ENCODE measurements at regions of chr14 and their contacts with region 1.

Region 1: GRCh38 chr14:64636208-64636979 is 67.8 kb upstream of the PLEKHG3 start:
- DNase-seq: peak; percentile 74 to 87
- ATAC-seq: peak; percentile 93
- H3K4me3 ChIP-seq: no peak overlapping the region
- H3K27ac ChIP-seq: no peak overlapping the region
- H3K4me1 ChIP-seq: no peaks in the 10 kb centered on the region
- H3K27me3 ChIP-seq: no peaks in the 10 kb centered on the region

Region 2: GRCh38 chr14:64503478-64504309 is 132.7 kb before region 1 on chr14 and contains the start of gene ZBTB25:
- intact Hi-C with region 1: loop called in 1 of 2 experiments (anchors 5 kb)
- DNase-seq: peak; percentile 95
- ATAC-seq: peak; percentile 92
- H3K4me3 ChIP-seq: peak within 1 kb of the TSS; percentile 74 to 88
- H3K27ac ChIP-seq: peak within 1 kb of the TSS; percentile 94
- H3K4me1 ChIP-seq: no peaks in the 10 kb centered on the region
- H3K27me3 ChIP-seq: no peaks in the 10 kb centered on the region
- total RNA-seq, gene ZBTB25: 17.2 to 25.4 TPM

Region 3: DNA sequence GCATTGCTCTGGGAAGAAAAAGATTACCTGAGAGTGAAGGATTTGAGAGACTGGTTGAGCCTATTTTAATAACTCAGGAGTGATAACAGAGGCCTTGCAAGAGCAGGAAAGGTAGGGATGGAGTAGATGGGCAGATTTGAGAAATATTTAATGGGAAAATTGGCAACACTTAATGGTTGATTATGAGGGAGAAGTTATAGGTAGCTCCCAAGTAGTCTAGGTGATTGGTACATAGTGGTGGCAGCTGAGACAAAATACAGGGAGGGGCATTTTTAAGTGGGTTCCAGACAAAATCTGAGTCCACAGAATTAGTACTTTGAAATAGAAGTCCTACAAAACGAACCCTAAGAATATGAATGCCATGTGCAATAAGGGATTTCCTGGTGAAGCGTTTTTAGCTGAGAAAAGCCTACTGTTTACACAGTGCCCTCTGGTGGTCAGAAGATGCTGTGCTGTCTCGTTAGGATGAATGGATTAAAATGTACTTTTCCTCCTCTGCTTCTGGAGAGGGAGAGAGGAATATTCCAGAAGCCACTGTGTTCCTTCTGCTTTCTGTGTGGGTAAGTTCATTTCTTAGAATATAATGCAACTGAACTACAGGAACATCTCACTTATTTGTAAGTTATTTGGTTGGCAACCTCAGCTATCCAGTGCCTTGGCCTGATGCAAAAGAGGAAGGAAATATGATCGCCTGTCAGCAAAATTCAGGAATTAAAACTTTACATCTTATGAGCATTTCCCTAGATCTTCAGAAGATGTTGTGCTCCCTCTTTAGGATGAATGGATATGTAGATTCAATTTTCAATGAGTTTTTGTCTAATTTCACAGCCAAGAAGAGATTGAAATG is 125.3 kb before region 1 on chr14:
- intact Hi-C with region 1: loop called (anchors 5 kb)
- DNase-seq: peak in 1 of 2 donors; percentile 70
- ATAC-seq: peak; percentile 90
- H3K4me3 ChIP-seq: no peak overlapping the region
- H3K27ac ChIP-seq: no peak overlapping the region
- H3K4me1 ChIP-seq: peaks cover 2 to 4% of the 10 kb centered on the region in 2 donors
- H3K27me3 ChIP-seq: no peaks in the 10 kb centered on the region

Region 4: DNA sequence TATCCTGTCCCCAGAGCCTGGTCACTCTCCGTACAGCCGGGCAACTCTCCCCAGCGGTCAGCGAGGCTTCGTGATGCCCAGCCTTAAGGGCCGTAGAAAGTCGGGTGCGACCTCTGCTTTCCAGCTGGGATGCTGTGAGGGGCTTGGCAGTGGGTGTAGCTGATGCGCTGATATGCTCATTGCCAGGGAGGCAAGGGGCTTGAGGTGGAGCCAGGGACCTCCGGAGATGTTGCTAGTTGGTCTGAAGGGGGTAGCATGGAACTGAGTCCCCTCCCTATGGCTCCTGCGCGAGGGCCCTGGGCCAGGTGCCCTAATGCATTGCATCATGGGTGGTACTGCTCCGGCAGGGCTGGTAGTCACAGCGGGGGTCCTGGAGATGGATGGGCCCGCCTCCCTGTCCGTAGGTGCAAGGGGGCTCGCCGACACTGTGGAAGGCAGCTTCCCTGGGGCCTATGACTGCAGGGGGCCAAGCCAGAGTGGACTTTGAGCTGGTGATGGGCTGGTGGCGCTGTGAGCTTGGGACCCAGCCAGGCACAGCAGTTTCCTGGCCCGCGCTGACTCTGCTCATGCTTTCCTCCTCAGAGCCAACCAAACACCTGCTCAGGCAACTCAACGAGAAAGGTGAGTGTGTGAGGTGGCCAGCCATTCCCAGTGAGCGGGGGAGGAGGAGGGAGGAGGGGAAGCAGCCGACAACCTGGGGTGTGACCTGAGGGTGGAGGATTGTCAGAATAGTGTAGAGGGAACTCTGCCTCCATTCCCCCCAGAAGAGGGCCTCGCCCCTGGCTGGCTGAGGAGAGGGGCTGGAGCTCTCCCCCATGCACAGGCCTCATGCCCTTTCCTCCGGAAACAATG is 100.1 kb after region 1 on chr14:
- intact Hi-C with region 1: no loop called
- DNase-seq: peak in 1 of 2 donors; percentile 69
- ATAC-seq: no peak
- H3K4me3 ChIP-seq: no peak overlapping the region
- H3K27ac ChIP-seq: no peak overlapping the region
- H3K4me1 ChIP-seq: no peaks in the 10 kb centered on the region
- H3K27me3 ChIP-seq: no peaks in the 10 kb centered on the region

Region 5: DNA sequence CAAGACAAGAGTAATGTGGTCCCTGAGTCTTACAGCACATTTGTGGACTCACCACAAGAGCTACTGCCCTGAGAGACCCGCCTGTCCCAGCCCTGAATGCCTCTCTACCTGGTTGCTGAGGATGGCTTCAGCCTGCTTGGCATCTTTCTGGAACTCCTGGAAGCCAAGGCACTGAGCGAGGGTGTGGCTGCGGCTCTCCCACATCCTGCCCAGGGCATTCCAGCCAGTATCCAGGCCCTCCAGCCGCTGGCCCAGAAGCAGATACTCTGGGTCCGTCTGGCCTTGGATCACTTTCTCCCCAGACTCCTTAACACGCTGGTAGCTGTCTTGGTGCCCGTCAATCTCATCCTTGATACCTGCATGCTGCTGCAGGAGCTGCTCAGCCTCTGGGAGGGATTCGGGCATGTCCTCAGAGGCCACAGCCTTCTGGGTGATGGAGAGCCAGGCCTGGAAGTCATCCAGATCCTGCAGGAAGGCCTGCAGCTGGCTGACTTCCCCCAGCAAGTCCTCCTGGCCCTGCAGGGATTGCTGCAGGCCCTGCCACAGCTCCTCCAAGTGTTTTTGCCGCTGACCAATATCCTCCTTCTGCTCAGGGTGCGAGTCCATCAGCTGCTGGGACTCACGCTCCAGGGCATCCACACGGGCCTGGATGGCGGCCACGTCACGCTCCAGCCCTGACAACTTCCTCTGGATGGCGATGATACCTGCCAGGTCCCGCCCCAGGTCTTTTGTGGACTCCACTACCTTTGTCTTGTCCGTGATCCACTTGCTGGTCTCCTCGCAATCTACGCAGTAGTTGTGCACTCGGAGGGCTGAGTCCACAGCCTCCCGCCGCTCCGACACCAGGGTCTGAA is 150.1 kb after region 1 on chr14:
- intact Hi-C with region 1: no loop called
- DNase-seq: no peak
- ATAC-seq: no peak
- H3K4me3 ChIP-seq: no peak overlapping the region
- H3K27ac ChIP-seq: no peak overlapping the region
- H3K4me1 ChIP-seq: no peaks in the 10 kb centered on the region
- H3K27me3 ChIP-seq: no peaks in the 10 kb centered on the region

Measured in aorta (tissue), 5 donors.